GM12878 (cell line): ENCODE measurements at regions of chr18 and their contacts with region 1.

Region 1: DNA sequence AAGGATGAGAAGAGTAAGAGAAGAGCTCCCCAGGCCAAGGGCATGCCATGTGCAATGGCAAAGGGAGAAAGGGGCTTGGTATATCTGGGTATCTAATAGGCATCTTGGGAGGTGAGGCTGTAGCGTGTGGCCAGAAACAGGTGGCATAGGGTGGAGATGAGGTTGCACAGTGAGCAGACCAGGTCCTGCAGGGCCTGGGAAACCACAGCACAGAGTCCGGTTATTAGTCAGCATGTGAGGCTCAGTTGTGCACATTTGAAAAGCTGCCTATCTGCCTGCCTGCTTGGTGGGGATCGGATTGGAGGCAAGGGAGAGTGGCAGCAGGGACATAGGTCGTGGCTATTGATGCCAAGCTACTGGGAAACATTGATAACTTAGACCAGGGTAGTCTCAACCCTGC is 190.6 kb downstream of the TPGS2 start:
- DNase-seq: peak; percentile 92
- ATAC-seq: peak; percentile 88
- H3K4me3 ChIP-seq: no peak overlapping the region
- H3K27ac ChIP-seq: peak overlapping the region; percentile 94
- H3K4me1 ChIP-seq: peaks cover 58% of the 10 kb centered on the region
- H3K27me3 ChIP-seq: no peaks in the 10 kb centered on the region
- CTCF ChIP-seq: no peak
- EP300 ChIP-seq: peak in 1 of 2 experiments; percentile 83; a peak in 2 of 4 replicates
- POLR2A ChIP-seq: no peak
- RAD21 ChIP-seq: no peak

Region 2: GRCh38 chr18:36481201-36481657 is 157.0 kb before region 1 on chr18:
- CTCF ChIA-PET with region 1: no interaction called
- POLR2A ChIA-PET with region 1: no interaction called
- RAD21 ChIA-PET with region 1: no interaction called
- SMC1A ChIA-PET with region 1: no interaction called
- in situ Hi-C with region 1: no loop called
- intact Hi-C with region 1: no loop called
- DNase-seq: no peak
- ATAC-seq: no peak
- H3K4me3 ChIP-seq: no peak overlapping the region
- H3K27ac ChIP-seq: no peak overlapping the region
- H3K4me1 ChIP-seq: no peaks in the 10 kb centered on the region
- H3K27me3 ChIP-seq: no peaks in the 10 kb centered on the region
- CTCF ChIP-seq: no peak
- EP300 ChIP-seq: no peak
- POLR2A ChIP-seq: no peak
- RAD21 ChIP-seq: no peak

Region 3: DNA sequence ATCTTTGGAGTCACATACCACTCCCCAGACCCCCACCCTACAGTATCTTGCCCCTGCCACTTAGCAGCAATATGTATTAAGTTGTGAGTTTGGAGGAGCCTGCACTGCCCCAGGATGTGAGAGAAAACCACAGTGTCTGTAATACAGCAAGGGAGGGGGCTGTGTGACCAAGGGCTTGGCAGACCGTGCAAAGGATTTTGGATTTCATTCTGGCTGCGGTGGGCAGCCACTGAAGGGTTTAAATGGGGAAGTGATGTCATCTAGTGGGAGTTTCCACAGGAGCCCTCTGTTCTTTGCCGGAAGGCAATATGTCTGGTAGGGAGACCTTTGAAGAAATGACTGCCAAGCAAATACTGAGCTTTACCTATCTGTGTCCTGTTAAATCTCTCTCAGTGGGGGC is 138.3 kb before region 1 on chr18:
- CTCF ChIA-PET with region 1: no interaction called
- POLR2A ChIA-PET with region 1: no interaction called
- RAD21 ChIA-PET with region 1: no interaction called
- SMC1A ChIA-PET with region 1: no interaction called
- in situ Hi-C with region 1: no loop called
- intact Hi-C with region 1: loop called (anchors 5 kb)
- DNase-seq: peak; percentile 66
- ATAC-seq: peak; percentile 96
- H3K4me3 ChIP-seq: no peak overlapping the region
- H3K27ac ChIP-seq: no peak overlapping the region
- H3K4me1 ChIP-seq: peaks cover 11% of the 10 kb centered on the region
- H3K27me3 ChIP-seq: no peaks in the 10 kb centered on the region
- CTCF ChIP-seq: no peak
- EP300 ChIP-seq: peak; percentile 27 to 54; a peak in 1 of 4 replicates
- POLR2A ChIP-seq: no peak
- RAD21 ChIP-seq: no peak

Region 4: GRCh38 chr18:36650906-36651305 is 12.7 kb after region 1 on chr18:
- CTCF ChIA-PET with region 1: interaction called, 6 read pairs
- POLR2A ChIA-PET with region 1: interaction called, 5 read pairs
- RAD21 ChIA-PET with region 1: interaction called, 13 read pairs
- SMC1A ChIA-PET with region 1: interaction called, 32 read pairs
- in situ Hi-C with region 1: no loop called
- intact Hi-C with region 1: loop called (anchors 2 kb)
- DNase-seq: no peak
- ATAC-seq: peak; percentile 80
- H3K4me3 ChIP-seq: no peak overlapping the region
- H3K27ac ChIP-seq: no peak overlapping the region
- H3K4me1 ChIP-seq: no peaks in the 10 kb centered on the region
- H3K27me3 ChIP-seq: no peaks in the 10 kb centered on the region
- CTCF ChIP-seq: no peak
- EP300 ChIP-seq: no peak
- POLR2A ChIP-seq: no peak
- RAD21 ChIP-seq: no peak

Region 5: GRCh38 chr18:36655930-36656329 is 17.7 kb after region 1 on chr18:
- CTCF ChIA-PET with region 1: interaction called, 6 read pairs
- POLR2A ChIA-PET with region 1: interaction called, 5 read pairs
- RAD21 ChIA-PET with region 1: interaction called, 13 read pairs
- SMC1A ChIA-PET with region 1: interaction called, 32 read pairs
- in situ Hi-C with region 1: no loop called
- intact Hi-C with region 1: loop called (anchors 2 kb)
- DNase-seq: no peak
- ATAC-seq: no peak
- H3K4me3 ChIP-seq: no peak overlapping the region
- H3K27ac ChIP-seq: no peak overlapping the region
- H3K4me1 ChIP-seq: no peaks in the 10 kb centered on the region
- H3K27me3 ChIP-seq: no peaks in the 10 kb centered on the region
- CTCF ChIP-seq: no peak
- EP300 ChIP-seq: no peak
- POLR2A ChIP-seq: no peak
- RAD21 ChIP-seq: no peak

Region 6: GRCh38 chr18:36672437-36673344 is 34.5 kb after region 1 on chr18:
- CTCF ChIA-PET with region 1: interaction called, 3 read pairs
- POLR2A ChIA-PET with region 1: interaction called, 5 read pairs
- RAD21 ChIA-PET with region 1: no interaction called
- SMC1A ChIA-PET with region 1: interaction called, 16 read pairs
- in situ Hi-C with region 1: no loop called
- intact Hi-C with region 1: no loop called
- DNase-seq: no peak
- ATAC-seq: peak; percentile 88
- H3K4me3 ChIP-seq: no peak overlapping the region
- H3K27ac ChIP-seq: no peak overlapping the region
- H3K4me1 ChIP-seq: 0 out of 2 replicates have a peak, but pooled peaks cover 7% of the 10 kb centered on the region
- H3K27me3 ChIP-seq: no peaks in the 10 kb centered on the region
- CTCF ChIP-seq: no peak
- EP300 ChIP-seq: no peak
- POLR2A ChIP-seq: no peak
- RAD21 ChIP-seq: no peak